PC-9 (cell line): ENCODE measurements at regions of chr17 and their contacts with region 1.

Region 1: GRCh38 chr17:48618256-48618897 is 3.3 kb upstream of the HOXB8 start:
- DNase-seq: peak; percentile 73 to 89
- H3K4me3 ChIP-seq: no peak overlapping the region
- H3K27ac ChIP-seq: no peak overlapping the region
- H3K4me1 ChIP-seq: peaks cover 9% of the 10 kb centered on the region; the same call in 1 of the 2 replicates
- H3K27me3 ChIP-seq: no peaks in the 10 kb centered on the region
- CTCF ChIP-seq: peak; percentile 98

Region 2: GRCh38 chr17:47987240-47987835 is 631.0 kb before region 1 on chr17:
- CTCF ChIA-PET with region 1: no interaction called
- POLR2A ChIA-PET with region 1: no interaction called
- intact Hi-C with region 1: no loop called
- DNase-seq: no peak
- H3K4me3 ChIP-seq: no peak overlapping the region
- H3K27ac ChIP-seq: no peak overlapping the region
- H3K4me1 ChIP-seq: no peaks in the 10 kb centered on the region
- H3K27me3 ChIP-seq: no peaks in the 10 kb centered on the region
- CTCF ChIP-seq: no peak

Region 3: GRCh38 chr17:48153691-48154358 is 464.6 kb before region 1 on chr17:
- CTCF ChIA-PET with region 1: no interaction called
- POLR2A ChIA-PET with region 1: no interaction called
- intact Hi-C with region 1: loop called (anchors 5 kb)
- DNase-seq: peak; percentile 27 to 64
- H3K4me3 ChIP-seq: no peak overlapping the region
- H3K27ac ChIP-seq: no peak overlapping the region
- H3K4me1 ChIP-seq: no peaks in the 10 kb centered on the region; the same call in 1 of the 2 replicates
- H3K27me3 ChIP-seq: peaks cover 33% of the 10 kb centered on the region; the same call in 1 of the 2 replicates
- CTCF ChIP-seq: peak; percentile 80

Region 4: GRCh38 chr17:48259694-48260291 is 358.6 kb before region 1 on chr17:
- CTCF ChIA-PET with region 1: no interaction called
- POLR2A ChIA-PET with region 1: no interaction called
- intact Hi-C with region 1: loop called (anchors 2 kb)
- DNase-seq: peak in 1 of 2 experiments; percentile 55
- H3K4me3 ChIP-seq: no peak overlapping the region
- H3K27ac ChIP-seq: no peak overlapping the region
- H3K4me1 ChIP-seq: peaks cover 7% of the 10 kb centered on the region
- H3K27me3 ChIP-seq: no peaks in the 10 kb centered on the region
- CTCF ChIP-seq: peak; percentile 87

Region 5: GRCh38 chr17:48335858-48336500 is 282.4 kb before region 1 on chr17:
- CTCF ChIA-PET with region 1: no interaction called
- POLR2A ChIA-PET with region 1: interaction called, 11 read pairs
- intact Hi-C with region 1: loop called (anchors 1 kb)
- DNase-seq: peak in 1 of 2 experiments; percentile 49
- H3K4me3 ChIP-seq: no peak overlapping the region
- H3K27ac ChIP-seq: no peak overlapping the region
- H3K4me1 ChIP-seq: peaks cover 28% of the 10 kb centered on the region
- H3K27me3 ChIP-seq: no peaks in the 10 kb centered on the region
- CTCF ChIP-seq: peak; percentile 93

Region 6: DNA sequence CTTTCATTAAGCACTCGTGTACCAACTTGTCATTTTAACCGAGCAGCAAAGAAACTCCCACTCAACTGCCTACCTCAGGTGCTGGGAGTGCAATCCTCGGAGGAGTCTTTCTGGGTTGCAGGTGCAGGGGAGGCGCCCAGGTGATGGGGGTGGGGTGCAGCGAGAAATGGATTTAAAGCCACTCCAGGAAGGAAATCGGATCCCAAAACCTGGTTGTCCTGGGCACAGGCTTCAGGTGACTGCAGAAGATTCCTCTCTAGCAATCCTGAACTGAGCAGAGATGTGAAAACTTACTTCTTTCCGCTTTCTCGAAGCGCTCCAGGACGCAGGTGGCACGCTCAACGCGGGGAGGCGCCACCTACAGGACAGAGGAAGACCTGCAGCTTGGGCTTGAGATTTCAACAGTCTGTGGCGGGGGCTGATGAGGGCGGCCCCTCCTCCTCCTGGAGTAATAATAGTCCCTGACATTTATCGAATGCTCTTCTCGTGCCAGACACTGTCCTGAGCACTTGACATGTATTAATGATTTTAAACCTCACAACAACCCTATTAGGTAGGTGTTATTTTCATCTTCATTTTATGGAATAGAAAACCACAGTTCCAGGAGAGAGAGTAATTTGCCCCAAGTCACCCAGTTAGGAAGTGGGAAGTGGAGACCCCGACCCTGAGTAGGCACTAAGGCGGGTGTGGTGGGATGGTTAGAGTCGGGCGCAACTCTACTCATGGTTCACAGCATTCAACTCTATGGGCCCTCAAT is 161.1 kb before region 1 on chr17:
- CTCF ChIA-PET with region 1: no interaction called
- POLR2A ChIA-PET with region 1: no interaction called
- intact Hi-C with region 1: no loop called
- DNase-seq: peak; percentile 44 to 51
- H3K4me3 ChIP-seq: peak overlapping the region; percentile 27; the same call in 1 of the 2 replicates
- H3K27ac ChIP-seq: no peak overlapping the region
- H3K4me1 ChIP-seq: 0 out of 2 replicates have a peak, but pooled peaks cover 11% of the 10 kb centered on the region
- H3K27me3 ChIP-seq: no peaks in the 10 kb centered on the region
- CTCF ChIP-seq: peak; percentile 98

Region 7: DNA sequence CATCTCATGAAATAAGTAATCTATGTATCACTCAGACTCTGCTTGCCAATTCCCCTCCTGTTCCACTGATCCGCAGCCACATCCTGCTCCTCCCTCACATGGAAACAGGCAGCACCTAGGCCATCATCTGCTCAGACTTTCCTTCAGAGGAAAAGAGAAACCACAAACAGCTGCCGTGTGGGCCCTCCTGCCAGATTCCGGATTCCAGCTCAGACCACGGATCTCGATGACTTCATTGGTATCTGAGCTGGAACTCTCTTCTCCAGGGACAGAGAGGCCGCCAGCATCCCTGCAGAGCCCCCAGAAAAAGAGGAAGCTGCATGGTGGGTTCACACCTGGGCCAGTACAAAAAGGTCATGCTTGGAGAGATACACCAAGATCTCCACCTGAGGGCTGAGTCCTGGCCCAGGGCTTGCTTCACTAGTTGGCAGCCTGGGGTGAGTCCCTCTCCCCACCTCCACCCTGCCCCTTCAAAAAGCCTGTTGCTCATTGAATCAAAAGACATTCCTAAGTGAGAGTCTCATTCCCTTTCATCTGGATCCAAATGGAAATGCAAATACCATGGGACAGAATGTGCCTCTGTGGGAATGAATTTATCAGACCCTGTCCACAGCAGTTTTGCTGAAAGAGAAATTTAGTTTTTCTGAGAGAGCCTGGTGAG is 134.8 kb before region 1 on chr17:
- CTCF ChIA-PET with region 1: interaction called, 12 read pairs
- POLR2A ChIA-PET with region 1: no interaction called
- intact Hi-C with region 1: no loop called
- DNase-seq: peak; percentile 77 to 93
- H3K4me3 ChIP-seq: no peak overlapping the region; the same call in 1 of the 2 replicates
- H3K27ac ChIP-seq: peak overlapping the region; percentile 82
- H3K4me1 ChIP-seq: peaks cover 34% of the 10 kb centered on the region
- H3K27me3 ChIP-seq: no peaks in the 10 kb centered on the region
- CTCF ChIP-seq: no peak